Activated CD4-positive, alpha-beta memory T cell treated with anti-CD3 and anti-CD28 coated beads, Interleukin-2, amount 10 ng/mL, durations not matched to agents 7 days and 5 days (primary cell): ENCODE measurements at regions of chr18 and their contacts with region 1.

Region 1: DNA sequence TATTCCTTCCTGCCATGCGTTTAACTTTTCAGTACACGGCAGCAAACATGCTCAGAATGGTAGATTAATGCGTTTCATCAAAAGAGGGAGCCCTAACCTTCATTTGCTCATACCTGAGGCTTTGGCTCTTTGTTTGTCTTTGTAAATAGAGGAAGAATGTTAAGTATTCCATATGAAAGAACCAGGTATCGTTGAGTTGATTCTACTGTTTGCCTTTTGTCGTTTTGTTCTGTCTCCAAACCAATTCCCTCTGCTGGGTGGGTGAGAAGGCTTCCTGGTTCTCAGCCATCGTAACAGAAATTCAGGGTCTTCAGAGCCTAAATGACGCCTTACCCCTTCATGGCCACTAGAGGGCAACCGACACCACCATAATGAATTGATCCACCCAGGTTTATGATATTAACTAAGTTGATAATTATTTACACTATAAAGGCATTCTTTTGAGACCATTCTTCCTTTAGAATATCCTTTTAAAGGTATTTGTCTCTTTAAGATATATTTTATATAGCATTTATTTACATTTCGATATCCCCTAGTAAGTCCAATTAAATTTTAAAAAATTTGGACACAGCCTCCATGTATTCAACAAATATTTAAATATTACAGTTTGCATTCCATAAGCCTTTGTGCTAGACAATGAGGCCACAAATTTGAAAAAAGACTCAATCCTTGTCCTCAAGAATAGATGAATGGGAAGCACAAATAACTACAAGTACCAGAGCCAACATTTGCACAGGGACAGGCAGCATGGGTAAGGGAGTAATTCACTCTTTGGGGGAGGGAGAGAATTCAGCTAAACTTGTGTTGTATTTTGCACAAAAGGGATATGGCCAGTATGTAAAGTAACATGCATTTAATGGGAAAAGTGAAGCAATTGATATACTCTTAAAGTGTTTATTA is 48.1 kb downstream of the TIMM21 start:
- DNase-seq: peak; percentile 52
- H3K4me3 Mint-ChIP-seq: peak overlapping the region; percentile 31
- H3K27ac Mint-ChIP-seq: no peak overlapping the region
- H3K4me1 Mint-ChIP-seq: peaks cover 2% of the 10 kb centered on the region
- H3K27me3 Mint-ChIP-seq: peaks cover 7% of the 10 kb centered on the region

Region 2: DNA sequence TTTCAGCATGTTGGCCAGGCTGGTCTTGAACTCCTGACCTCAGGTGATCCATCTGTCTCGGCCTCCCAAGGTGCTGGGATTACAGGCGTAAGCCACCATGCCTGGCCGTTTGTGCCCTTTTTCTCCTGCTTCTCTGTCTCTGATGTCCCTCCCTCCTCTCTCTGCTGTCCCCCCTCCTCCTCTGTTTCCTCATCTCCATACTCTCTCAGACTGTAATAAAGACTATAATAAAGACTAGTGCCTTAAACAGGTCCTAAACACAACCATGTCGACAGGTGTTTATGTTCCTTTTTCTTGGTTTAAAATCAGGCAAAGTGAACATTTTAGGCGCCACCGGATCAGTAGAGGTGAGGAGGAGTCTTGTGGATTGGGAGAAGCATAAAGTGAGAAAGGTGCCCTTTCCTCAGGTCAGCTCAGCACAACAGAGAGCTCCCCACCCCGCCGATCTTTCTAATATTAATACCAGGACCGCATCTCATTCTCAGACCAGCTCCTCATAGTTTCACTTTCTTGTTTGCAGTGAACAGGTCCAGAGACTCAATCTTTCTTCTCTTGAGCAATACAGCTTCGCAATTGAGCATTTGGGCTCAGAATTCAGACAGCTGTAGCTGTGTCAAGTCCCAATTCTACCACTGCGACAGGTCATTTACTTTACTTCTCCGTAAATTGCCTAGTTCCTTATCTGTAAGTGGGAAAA is 24.4 kb before region 1 on chr18:
- CTCF ChIA-PET with region 1: no interaction called
- POLR2A ChIA-PET with region 1: no interaction called
- DNase-seq: no peak
- H3K4me3 Mint-ChIP-seq: peak overlapping the region; percentile 53
- H3K27ac Mint-ChIP-seq: no peak overlapping the region
- H3K4me1 Mint-ChIP-seq: peaks cover 9% of the 10 kb centered on the region
- H3K27me3 Mint-ChIP-seq: peaks cover 20% of the 10 kb centered on the region

Region 3: GRCh38 chr18:74217476-74218143 is 21.1 kb after region 1 on chr18:
- CTCF ChIA-PET with region 1: no interaction called
- POLR2A ChIA-PET with region 1: no interaction called
- DNase-seq: no peak
- H3K4me3 Mint-ChIP-seq: no peak overlapping the region
- H3K27ac Mint-ChIP-seq: no peak overlapping the region
- H3K4me1 Mint-ChIP-seq: no peaks in the 10 kb centered on the region
- H3K27me3 Mint-ChIP-seq: peaks cover 6% of the 10 kb centered on the region

Region 4: DNA sequence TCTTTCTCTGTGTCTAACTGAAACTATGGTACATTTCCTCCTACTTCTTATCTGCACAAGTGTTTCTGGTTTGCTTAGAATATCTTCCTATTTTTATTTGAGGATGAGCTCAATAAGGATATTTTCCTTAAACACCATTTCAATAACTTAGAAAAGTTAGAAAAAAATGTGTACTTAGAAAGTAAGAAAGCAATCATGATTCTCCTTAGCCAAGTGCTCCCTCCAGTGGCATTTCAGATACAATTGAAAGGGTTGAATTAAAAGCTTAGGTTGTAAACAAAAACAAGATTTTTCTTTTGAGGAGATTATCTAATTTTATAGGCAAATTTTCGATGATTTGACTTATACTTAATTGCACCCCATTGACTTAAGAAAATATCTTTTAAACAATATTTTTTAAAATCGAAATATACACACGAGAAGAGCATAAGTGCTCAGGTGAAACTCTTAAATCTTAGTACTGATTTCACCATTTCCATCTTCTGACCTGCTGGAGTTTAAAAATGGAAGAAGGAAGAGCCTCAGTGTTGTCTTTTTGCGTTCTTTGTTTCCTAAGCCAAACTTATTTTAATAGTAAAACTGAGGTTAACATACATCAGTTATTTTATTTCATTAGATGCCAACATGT is 146.1 kb after region 1 on chr18:
- CTCF ChIA-PET with region 1: interaction called, 15 read pairs
- POLR2A ChIA-PET with region 1: no interaction called
- DNase-seq: no peak
- H3K4me3 Mint-ChIP-seq: no peak overlapping the region
- H3K27ac Mint-ChIP-seq: no peak overlapping the region
- H3K4me1 Mint-ChIP-seq: no peaks in the 10 kb centered on the region
- H3K27me3 Mint-ChIP-seq: peaks cover 26% of the 10 kb centered on the region